CD14-positive monocyte (primary cell): ENCODE measurements at regions of chrX and their contacts with region 1.

Region 1: DNA sequence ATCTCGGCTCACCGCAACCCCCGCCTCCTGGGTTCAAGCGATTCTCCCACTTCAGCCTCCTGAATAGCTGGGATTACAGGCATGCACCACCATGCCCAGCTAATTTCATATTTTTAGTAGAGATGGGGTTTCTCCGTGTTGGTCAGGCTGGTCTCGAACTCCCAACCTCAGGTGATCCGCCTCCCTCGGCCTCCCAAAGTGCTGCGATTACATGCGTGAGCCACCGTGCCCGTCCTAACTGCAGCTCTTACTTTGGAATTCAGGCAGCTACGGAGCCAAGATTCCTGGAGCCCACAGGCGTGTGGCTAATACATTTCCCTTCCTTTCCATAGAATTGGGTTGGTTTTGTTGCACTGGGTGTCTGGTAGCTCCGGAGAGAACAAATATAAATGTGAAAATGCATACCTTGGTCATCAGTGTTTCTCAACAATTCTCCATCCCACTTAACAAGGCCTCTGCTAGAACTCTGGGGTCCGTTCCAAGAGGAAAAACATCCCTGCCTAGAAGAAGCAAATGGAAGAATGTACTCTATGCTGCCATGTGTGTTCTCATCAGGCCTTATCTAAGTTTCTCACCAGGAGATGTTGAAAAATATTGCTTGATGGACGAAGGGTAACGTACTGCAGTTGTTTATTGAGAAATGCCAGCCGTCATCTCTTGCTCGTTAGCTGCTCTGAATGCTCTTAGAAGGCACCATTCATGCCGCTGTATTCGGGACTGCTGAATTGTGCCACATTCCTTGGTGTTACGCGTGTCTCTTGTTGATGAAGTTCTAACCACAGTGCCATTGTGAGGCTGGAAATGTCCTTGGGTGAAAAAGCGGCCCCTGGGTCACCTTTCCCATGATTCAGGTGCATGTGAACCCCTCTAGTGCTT is 50.6 kb upstream of the CD99 start:
- DNase-seq: no peak
- H3K4me3 ChIP-seq: no peak overlapping the region
- H3K4me3 Mint-ChIP-seq: no peak overlapping the region
- H3K27ac ChIP-seq: no peak overlapping the region
- H3K27ac Mint-ChIP-seq: no peak overlapping the region
- H3K4me1 ChIP-seq: peaks cover 13 to 14% of the 10 kb centered on the region in 2 donors
- H3K4me1 Mint-ChIP-seq: peaks cover 22% of the 10 kb centered on the region
- H3K27me3 ChIP-seq: no peaks in the 10 kb centered on the region
- H3K27me3 Mint-ChIP-seq: no peaks in the 10 kb centered on the region
- CTCF ChIP-seq: no peak

Region 2: GRCh38 chrX:1870421-1870820 is 770.1 kb before region 1 on chrX:
- intact Hi-C with region 1: no loop called
- DNase-seq: no peak
- H3K4me3 ChIP-seq: no peak overlapping the region
- H3K4me3 Mint-ChIP-seq: no peak overlapping the region
- H3K27ac ChIP-seq: no peak overlapping the region
- H3K27ac Mint-ChIP-seq: no peak overlapping the region
- H3K4me1 ChIP-seq: no peaks in the 10 kb centered on the region
- H3K4me1 Mint-ChIP-seq: no peaks in the 10 kb centered on the region
- H3K27me3 ChIP-seq: no peaks in the 10 kb centered on the region
- H3K27me3 Mint-ChIP-seq: peaks cover 2 to 5% (median 2%) of the 10 kb centered on the region in 3 donors
- CTCF ChIP-seq: no peak

Region 3: GRCh38 chrX:2516626-2517025 is 123.9 kb before region 1 on chrX:
- intact Hi-C with region 1: no loop called
- DNase-seq: no peak
- H3K4me3 ChIP-seq: no peak overlapping the region
- H3K4me3 Mint-ChIP-seq: no peak overlapping the region
- H3K27ac ChIP-seq: no peak overlapping the region
- H3K27ac Mint-ChIP-seq: no peak overlapping the region
- H3K4me1 ChIP-seq: peaks cover 12% of the 10 kb centered on the region in 2 donors
- H3K4me1 Mint-ChIP-seq: peaks cover 2% of the 10 kb centered on the region
- H3K27me3 ChIP-seq: no peaks in the 10 kb centered on the region
- H3K27me3 Mint-ChIP-seq: peaks cover 2 to 4% (median 4%) of the 10 kb centered on the region in 3 donors
- CTCF ChIP-seq: no peak

Region 4: GRCh38 chrX:2552620-2553201 is 87.8 kb before region 1 on chrX:
- intact Hi-C with region 1: no loop called
- DNase-seq: no peak
- H3K4me3 ChIP-seq: no peak overlapping the region
- H3K4me3 Mint-ChIP-seq: no peak overlapping the region
- H3K27ac ChIP-seq: no peak overlapping the region
- H3K27ac Mint-ChIP-seq: no peak overlapping the region
- H3K4me1 ChIP-seq: no peaks in the 10 kb centered on the region
- H3K4me1 Mint-ChIP-seq: no peaks in the 10 kb centered on the region
- H3K27me3 ChIP-seq: no peaks in the 10 kb centered on the region
- H3K27me3 Mint-ChIP-seq: peaks cover 2 to 7% (median 2%) of the 10 kb centered on the region in 3 donors
- CTCF ChIP-seq: no peak

Region 5: DNA sequence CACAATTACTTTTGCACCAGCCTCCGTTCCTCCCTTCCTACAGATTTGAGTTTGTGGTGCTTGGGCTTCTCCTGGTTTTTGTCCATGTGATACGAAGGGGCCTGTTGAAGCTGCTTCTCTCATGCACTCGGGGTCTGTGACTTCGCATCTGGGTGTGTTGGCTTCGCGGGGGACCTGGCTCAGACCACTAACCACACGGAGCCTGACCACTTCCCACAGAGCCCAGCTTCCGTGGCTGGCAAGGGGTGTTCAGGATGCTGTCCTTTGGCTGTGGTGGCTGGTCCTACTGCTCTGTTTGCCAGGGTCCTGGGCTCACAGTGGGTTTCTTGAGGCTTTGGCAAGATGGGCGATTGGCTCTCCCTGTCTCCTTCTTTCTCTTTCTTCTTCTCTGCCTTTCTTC is 91.6 kb after region 1 on chrX:
- intact Hi-C with region 1: loop called in 1 of 2 experiments (anchors 10 kb)
- DNase-seq: no peak
- H3K4me3 ChIP-seq: no peak overlapping the region
- H3K4me3 Mint-ChIP-seq: no peak overlapping the region
- H3K27ac ChIP-seq: no peak overlapping the region
- H3K27ac Mint-ChIP-seq: peak overlapping the region in 5 of 7 donors; percentile 30 to 73 (median 47)
- H3K4me1 ChIP-seq: no peaks in the 10 kb centered on the region
- H3K4me1 Mint-ChIP-seq: peaks cover 4% of the 10 kb centered on the region
- H3K27me3 ChIP-seq: no peaks in the 10 kb centered on the region
- H3K27me3 Mint-ChIP-seq: peaks cover 1 to 3% (median 2%) of the 10 kb centered on the region in 3 donors
- CTCF ChIP-seq: no peak